ENCODE measurements at regions of chr5 and their contacts with region 1.

Region 1: DNA sequence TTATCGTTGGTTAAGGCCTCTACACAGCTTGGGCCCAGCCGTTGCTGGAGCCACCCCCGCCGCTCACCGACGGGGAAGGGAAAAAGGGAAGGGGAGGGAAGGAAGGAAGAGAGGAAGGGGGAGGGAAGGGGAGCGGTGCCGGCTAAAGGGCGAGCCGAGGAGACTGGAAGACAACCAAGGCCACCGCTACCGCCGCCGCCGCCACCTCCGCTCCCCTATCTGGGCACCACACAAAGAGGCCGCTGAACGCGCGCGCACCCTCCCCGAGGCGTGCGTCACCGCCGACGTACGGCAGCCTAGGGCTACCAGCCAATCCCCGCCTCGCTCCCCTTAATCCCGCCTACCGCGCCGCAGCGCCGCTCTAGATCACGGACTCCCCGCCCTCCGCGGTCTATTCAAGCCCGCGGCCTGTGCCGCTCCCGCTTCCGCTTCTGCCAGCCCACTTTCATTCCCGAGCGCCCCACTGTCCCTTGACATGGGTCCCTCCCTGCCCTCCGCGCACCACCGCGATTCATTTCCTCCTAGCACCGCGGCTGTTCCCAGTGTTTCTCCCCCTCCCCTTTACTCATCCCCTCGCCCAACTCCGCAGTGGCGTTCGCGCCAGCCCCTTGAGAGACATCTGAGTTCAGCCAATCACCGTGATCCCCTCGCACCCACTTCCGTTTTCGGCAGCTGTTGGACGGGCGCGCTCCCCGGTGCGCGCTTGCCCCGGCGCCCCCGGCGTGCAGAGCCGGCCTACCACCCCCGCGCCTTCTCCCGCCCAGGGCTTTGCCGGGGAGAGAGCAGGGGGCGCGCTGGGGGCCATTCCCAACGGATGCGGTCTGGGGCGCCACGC is at the start of gene HNRNPA0:
- DNase-seq: peak; percentile 98
- ATAC-seq: peak; percentile 87
- H3K4me3 Mint-ChIP-seq: peak within 1 kb of the TSS; percentile 77
- H3K27ac Mint-ChIP-seq: peak within 1 kb of the TSS; percentile 97
- H3K4me1 Mint-ChIP-seq: peaks cover 28% of the 10 kb centered on the region
- H3K27me3 Mint-ChIP-seq: no peaks in the 10 kb centered on the region
- total RNA-seq, gene HNRNPA0: 18.9 to 32.1 TPM

Region 2: DNA sequence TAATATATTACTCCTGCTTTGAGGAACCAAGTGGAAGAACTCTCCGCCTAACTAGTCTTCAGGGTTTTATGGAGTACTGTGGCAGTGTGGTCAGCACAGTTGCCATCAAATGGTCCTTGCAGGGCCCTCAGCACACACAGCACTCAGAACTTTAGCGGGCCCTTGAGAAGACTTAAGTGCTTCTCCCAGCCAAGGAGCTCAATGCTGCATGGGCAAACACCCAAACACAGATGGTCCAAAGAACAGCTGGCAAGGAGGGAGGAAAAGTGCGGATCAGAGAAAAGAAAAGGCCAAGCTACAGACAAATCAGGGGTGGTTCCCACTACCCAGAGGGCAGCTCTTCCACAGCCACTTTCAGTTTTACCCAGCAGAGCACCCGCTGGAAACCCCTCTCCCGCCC is 353.8 kb before region 1 on chr5:
- CTCF ChIA-PET with region 1: no interaction called
- POLR2A ChIA-PET with region 1: no interaction called
- intact Hi-C with region 1: no loop called
- DNase-seq: no peak
- ATAC-seq: no peak
- H3K4me3 Mint-ChIP-seq: no peak overlapping the region
- H3K27ac Mint-ChIP-seq: no peak overlapping the region
- H3K4me1 Mint-ChIP-seq: no peaks in the 10 kb centered on the region
- H3K27me3 Mint-ChIP-seq: peaks cover 16% of the 10 kb centered on the region

Region 3: DNA sequence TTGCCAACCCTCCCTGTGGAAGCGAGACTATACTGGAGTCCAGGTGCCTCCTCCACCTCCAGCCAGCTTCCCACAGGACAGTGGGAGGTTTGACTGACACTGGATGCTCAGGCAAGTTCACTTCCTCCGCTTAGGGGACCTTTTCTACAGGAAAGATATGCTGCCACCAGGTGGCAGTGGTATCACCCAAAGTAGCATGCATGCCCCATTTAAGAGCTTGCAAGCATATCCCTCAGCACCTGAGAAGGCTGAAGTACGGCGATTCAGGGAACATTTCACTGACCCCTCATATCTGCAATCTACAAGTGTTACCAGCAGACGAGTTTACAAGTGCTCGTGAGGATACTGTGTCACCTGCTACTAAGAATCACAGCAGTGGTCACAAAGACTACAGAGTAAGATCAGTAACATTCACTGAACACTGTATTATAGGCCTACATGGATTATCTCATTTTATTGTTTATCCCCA is 94.0 kb before region 1 on chr5:
- CTCF ChIA-PET with region 1: interaction called, 75 read pairs
- POLR2A ChIA-PET with region 1: interaction called, 4 read pairs
- intact Hi-C with region 1: no loop called
- DNase-seq: peak; percentile 85
- ATAC-seq: peak; percentile 96
- H3K4me3 Mint-ChIP-seq: no peak overlapping the region
- H3K27ac Mint-ChIP-seq: no peak overlapping the region
- H3K4me1 Mint-ChIP-seq: peaks cover 19% of the 10 kb centered on the region
- H3K27me3 Mint-ChIP-seq: no peaks in the 10 kb centered on the region

Region 4: DNA sequence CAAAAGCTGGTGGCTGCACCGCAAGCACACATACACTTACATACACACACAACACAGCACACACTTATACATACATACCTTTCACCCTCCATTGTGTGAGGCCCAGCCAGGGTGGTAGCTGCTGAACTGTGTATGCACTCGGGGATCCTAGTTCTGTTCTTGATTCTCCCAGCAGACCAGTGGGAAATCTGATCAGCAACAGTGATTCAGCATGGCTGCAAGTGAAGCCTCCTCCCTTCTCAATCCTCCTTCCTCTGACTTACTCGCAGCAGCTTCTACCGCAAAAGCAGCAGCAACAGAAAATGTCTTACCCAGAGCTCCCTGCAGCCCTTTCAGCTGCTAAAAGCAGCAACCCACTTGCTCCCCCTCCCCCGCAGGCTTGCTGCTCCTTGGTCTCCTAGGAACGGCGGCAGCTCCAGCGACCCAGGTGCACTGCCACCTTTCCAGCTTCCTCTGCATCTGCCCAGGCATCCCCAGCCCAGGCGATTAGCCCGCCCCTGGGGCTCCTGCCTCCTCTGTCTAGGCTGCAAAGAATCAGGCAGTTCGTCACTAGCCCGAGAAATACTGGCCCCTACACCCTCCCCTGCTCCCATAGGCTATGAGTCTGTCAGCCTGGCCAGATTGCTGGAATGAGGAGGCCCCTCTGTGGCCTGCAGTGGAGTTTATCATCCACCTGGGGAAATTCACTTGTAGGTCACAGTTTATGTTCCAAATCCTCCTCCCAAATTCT is 18.6 kb before region 1 on chr5 and contains the start of gene KLHL3:
- CTCF ChIA-PET with region 1: interaction called, 35 read pairs
- POLR2A ChIA-PET with region 1: interaction called, 5 read pairs
- intact Hi-C with region 1: loop called (anchors 1 kb)
- DNase-seq: peak; percentile 71
- ATAC-seq: peak; percentile 49
- H3K4me3 Mint-ChIP-seq: no peak within 1 kb of the TSS
- H3K27ac Mint-ChIP-seq: no peak within 1 kb of the TSS
- H3K4me1 Mint-ChIP-seq: peaks cover 18% of the 10 kb centered on the region
- H3K27me3 Mint-ChIP-seq: no peaks in the 10 kb centered on the region
- total RNA-seq, gene KLHL3: 6.8 to 10.8 TPM

Region 5: GRCh38 chr5:137778772-137779564 is 24.6 kb after region 1 on chr5:
- CTCF ChIA-PET with region 1: interaction called, 14 read pairs
- POLR2A ChIA-PET with region 1: no interaction called
- intact Hi-C with region 1: no loop called
- DNase-seq: no peak
- ATAC-seq: no peak
- H3K4me3 Mint-ChIP-seq: no peak overlapping the region
- H3K27ac Mint-ChIP-seq: no peak overlapping the region
- H3K4me1 Mint-ChIP-seq: no peaks in the 10 kb centered on the region
- H3K27me3 Mint-ChIP-seq: no peaks in the 10 kb centered on the region

Region 6: GRCh38 chr5:138178516-138179276 is 424.4 kb after region 1 on chr5 and contains the starts of genes BRD8 and KIF20A:
- CTCF ChIA-PET with region 1: interaction called, 3 read pairs
- POLR2A ChIA-PET with region 1: interaction called, 3 read pairs
- intact Hi-C with region 1: loop called in 1 of 2 experiments (anchors 1 kb)
- DNase-seq: peak; percentile 96
- ATAC-seq: peak; percentile 93
- H3K4me3 Mint-ChIP-seq: no peak within 1 kb of the TSS
- H3K27ac Mint-ChIP-seq: peak within 1 kb of the TSS; percentile 73
- H3K4me1 Mint-ChIP-seq: peaks cover 16% of the 10 kb centered on the region
- H3K27me3 Mint-ChIP-seq: no peaks in the 10 kb centered on the region
- total RNA-seq, gene BRD8: 60.7 to 61.4 TPM
- total RNA-seq, gene KIF20A: 66.6 to 76.3 TPM

Region 7: DNA sequence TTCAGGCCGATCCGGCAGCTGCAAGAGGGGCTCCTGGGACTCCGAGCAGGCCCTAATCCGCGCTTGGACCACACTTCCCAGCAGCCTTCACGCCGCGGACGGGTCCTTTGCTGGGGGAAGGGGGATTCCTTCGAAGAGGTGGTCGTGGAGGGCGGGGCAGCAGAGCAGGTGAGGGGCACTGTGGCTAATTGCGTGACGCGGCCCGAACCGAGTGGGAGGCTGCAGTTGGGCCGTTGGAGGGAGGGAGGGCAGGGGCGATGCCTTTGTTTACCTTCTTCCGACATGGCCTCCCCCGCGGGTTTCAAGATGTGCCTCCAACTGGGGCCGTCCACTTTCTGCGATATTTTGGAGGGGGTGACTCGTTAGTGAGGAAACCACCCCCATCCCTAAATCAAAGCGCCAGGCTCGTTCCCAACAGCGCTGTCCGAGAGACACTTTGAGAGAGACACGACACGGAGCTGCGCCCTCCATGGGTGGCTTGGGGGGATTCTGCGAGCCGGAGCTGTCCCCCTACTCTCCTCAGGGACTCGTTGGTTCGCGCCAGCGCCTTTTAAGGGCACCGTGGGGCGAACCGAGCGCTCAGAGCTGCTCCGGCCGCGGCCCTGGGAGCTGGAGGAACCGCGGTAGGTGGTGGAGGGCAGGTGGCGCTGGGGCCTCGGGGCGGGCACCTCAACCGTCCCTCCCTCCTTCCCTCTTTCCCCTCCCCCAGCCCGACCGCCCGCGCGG is 583.5 kb after region 1 on chr5 and contains the start of gene FAM53C:
- CTCF ChIA-PET with region 1: no interaction called
- POLR2A ChIA-PET with region 1: no interaction called
- intact Hi-C with region 1: loop called (anchors 1 to 10 kb)
- DNase-seq: peak; percentile 95
- ATAC-seq: peak; percentile 88
- H3K4me3 Mint-ChIP-seq: peak within 1 kb of the TSS; percentile 84
- H3K27ac Mint-ChIP-seq: peak within 1 kb of the TSS; percentile 97
- H3K4me1 Mint-ChIP-seq: peaks cover 38% of the 10 kb centered on the region
- H3K27me3 Mint-ChIP-seq: no peaks in the 10 kb centered on the region
- total RNA-seq, gene FAM53C: 22.8 to 25.9 TPM

Region 8: GRCh38 chr5:139293504-139294373 is 1539.4 kb after region 1 on chr5 and contains the start of gene MATR3:
- CTCF ChIA-PET with region 1: no interaction called
- POLR2A ChIA-PET with region 1: no interaction called
- intact Hi-C with region 1: loop called in 1 of 2 experiments (anchors 5 kb)
- DNase-seq: peak; percentile 98
- ATAC-seq: peak; percentile 92
- H3K4me3 Mint-ChIP-seq: peak within 1 kb of the TSS; percentile 97
- H3K27ac Mint-ChIP-seq: peak within 1 kb of the TSS; percentile 99
- H3K4me1 Mint-ChIP-seq: peaks cover 37% of the 10 kb centered on the region
- H3K27me3 Mint-ChIP-seq: no peaks in the 10 kb centered on the region
- total RNA-seq, gene MATR3: 113 to 133 TPM